ENCODE measurements at regions of chr5 and their contacts with region 1.

Region 1: GRCh38 chr5:80960531-80961375 is 590 bp downstream of the RASGRF2 start:
- DNase-seq: peak; percentile 49
- H3K4me3 Mint-ChIP-seq: peak overlapping the region; percentile 80
- H3K27ac Mint-ChIP-seq: peak overlapping the region; percentile 61
- H3K4me1 Mint-ChIP-seq: peaks cover 59% of the 10 kb centered on the region
- H3K27me3 Mint-ChIP-seq: no peaks in the 10 kb centered on the region

Region 2: DNA sequence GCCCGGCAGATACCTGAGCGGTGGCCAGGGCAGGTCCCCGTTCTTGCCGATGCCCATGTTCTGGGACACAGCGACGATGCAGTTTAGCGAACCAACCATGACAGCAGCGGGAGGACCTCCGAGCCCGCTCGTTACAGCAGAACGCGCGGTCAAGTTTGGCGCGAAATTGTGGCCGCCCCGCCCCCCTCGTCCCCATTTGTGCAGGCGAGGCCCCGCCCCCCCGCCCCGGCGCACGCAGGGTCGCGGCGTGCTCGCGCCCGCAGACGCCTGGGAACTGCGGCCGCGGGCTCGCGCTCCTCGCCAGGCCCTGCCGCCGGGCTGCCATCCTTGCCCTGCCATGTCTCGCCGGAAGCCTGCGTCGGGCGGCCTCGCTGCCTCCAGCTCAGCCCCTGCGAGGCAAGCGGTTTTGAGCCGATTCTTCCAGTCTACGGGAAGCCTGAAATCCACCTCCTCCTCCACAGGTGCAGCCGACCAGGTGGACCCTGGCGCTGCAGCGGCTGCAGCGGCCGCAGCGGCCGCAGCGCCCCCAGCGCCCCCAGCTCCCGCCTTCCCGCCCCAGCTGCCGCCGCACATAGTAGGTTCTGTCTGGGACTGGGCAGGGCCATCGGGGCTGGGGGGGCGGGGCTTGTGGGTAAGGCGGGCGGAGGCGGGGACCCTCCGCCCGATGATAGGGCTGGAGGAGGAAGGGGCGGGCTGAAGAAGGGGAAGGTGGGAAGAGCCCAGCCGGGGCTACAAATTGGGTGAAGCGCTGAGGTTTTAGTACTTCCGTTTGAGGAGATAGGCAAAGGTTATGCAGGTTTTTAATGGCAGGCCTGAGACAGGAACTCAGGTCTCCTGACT is 306.1 kb before region 1 on chr5 and contains the starts of genes DHFR and MSH3:
- CTCF ChIA-PET with region 1: no interaction called
- intact Hi-C with region 1: loop called (anchors 1 kb)
- DNase-seq: peak; percentile 95
- H3K4me3 Mint-ChIP-seq: peak within 1 kb of the TSS; percentile 95
- H3K27ac Mint-ChIP-seq: peak within 1 kb of the TSS; percentile 99
- H3K4me1 Mint-ChIP-seq: peaks cover 25% of the 10 kb centered on the region
- H3K27me3 Mint-ChIP-seq: no peaks in the 10 kb centered on the region
- total RNA-seq, gene DHFR: 107 to 112 TPM
- total RNA-seq, gene MSH3: 25.1 to 25.8 TPM

Region 3: DNA sequence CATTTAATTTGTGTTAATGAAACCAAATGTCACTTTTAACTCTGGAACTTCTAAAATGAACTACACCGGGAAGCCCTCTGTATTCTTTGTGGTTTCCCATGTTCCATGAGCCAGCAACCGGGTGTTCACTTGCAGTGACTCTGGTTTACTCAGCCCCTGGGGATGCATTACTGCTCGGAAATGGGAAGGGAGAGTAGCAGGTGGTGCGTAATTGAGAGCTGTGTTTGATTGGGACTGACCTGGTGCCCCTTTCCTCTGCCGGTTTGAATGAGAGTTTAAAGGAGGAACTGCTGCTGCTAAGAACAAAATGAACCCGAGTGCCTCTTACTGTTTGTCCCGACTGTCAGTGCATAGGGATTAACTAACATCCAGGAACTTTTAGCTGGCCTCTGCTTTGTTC is 205.9 kb before region 1 on chr5:
- CTCF ChIA-PET with region 1: no interaction called
- intact Hi-C with region 1: loop called (anchors 1 kb)
- DNase-seq: peak; percentile 81
- H3K4me3 Mint-ChIP-seq: peak overlapping the region; percentile 32
- H3K27ac Mint-ChIP-seq: peak overlapping the region; percentile 43
- H3K4me1 Mint-ChIP-seq: peaks cover 54% of the 10 kb centered on the region
- H3K27me3 Mint-ChIP-seq: no peaks in the 10 kb centered on the region

Region 4: GRCh38 chr5:81006947-81007636 is 46.3 kb after region 1 on chr5:
- CTCF ChIA-PET with region 1: interaction called, 7 read pairs
- intact Hi-C with region 1: loop called (anchors 1 kb)
- DNase-seq: peak; percentile 81
- H3K4me3 Mint-ChIP-seq: peak overlapping the region; percentile 89
- H3K27ac Mint-ChIP-seq: peak overlapping the region; percentile 99
- H3K4me1 Mint-ChIP-seq: peaks cover 78% of the 10 kb centered on the region
- H3K27me3 Mint-ChIP-seq: no peaks in the 10 kb centered on the region

Region 5: DNA sequence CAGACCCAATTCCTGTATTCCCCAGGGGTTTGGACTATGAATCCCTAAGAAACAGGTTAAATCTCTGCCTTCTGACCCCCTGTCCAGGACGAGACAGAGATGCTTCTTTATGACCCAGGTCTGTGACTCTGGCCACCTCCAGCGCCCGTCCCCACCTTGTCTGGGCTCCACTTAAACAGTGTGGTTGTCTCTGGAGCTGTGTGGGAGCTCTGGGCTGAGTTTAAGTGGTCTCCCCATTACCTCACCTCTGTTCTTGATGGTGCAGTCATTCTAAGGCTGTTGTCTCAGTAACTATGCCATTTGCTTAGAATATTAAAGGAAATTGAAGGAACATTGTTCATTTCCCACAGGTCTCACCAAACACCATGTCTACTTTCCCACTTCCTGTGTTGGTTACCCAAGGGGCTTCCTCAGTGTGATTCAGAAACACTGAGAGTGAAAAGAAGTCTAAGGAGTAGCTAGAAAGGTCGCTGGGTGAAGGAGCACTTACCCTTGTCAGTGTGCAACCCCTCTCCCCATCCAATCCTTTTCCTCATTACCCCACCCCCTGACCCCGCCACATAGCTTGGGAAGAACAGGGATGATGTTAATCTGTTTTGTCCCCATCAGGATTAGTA is 144.6 kb after region 1 on chr5:
- CTCF ChIA-PET with region 1: interaction called, 12 read pairs
- intact Hi-C with region 1: loop called (anchors 1 kb)
- DNase-seq: no peak
- H3K4me3 Mint-ChIP-seq: no peak overlapping the region
- H3K27ac Mint-ChIP-seq: peak overlapping the region; percentile 5
- H3K4me1 Mint-ChIP-seq: peaks cover 25% of the 10 kb centered on the region
- H3K27me3 Mint-ChIP-seq: no peaks in the 10 kb centered on the region

Region 6: GRCh38 chr5:81194633-81195333 is 234.0 kb after region 1 on chr5:
- CTCF ChIA-PET with region 1: no interaction called
- intact Hi-C with region 1: loop called (anchors 2 kb)
- DNase-seq: peak; percentile 88
- H3K4me3 Mint-ChIP-seq: peak overlapping the region; percentile 51
- H3K27ac Mint-ChIP-seq: no peak overlapping the region
- H3K4me1 Mint-ChIP-seq: peaks cover 8% of the 10 kb centered on the region
- H3K27me3 Mint-ChIP-seq: no peaks in the 10 kb centered on the region

Region 7: GRCh38 chr5:82142928-82143577 is 1182.3 kb after region 1 on chr5:
- CTCF ChIA-PET with region 1: no interaction called
- intact Hi-C with region 1: no loop called
- DNase-seq: no peak
- H3K4me3 Mint-ChIP-seq: no peak overlapping the region
- H3K27ac Mint-ChIP-seq: no peak overlapping the region
- H3K4me1 Mint-ChIP-seq: no peaks in the 10 kb centered on the region
- H3K27me3 Mint-ChIP-seq: no peaks in the 10 kb centered on the region